Activated CD8-positive, alpha-beta T cell treated with anti-CD3 and anti-CD28 coated beads for 36 hours (primary cell): ENCODE measurements at regions of chr6 and their contacts with region 1.

Region 1: DNA sequence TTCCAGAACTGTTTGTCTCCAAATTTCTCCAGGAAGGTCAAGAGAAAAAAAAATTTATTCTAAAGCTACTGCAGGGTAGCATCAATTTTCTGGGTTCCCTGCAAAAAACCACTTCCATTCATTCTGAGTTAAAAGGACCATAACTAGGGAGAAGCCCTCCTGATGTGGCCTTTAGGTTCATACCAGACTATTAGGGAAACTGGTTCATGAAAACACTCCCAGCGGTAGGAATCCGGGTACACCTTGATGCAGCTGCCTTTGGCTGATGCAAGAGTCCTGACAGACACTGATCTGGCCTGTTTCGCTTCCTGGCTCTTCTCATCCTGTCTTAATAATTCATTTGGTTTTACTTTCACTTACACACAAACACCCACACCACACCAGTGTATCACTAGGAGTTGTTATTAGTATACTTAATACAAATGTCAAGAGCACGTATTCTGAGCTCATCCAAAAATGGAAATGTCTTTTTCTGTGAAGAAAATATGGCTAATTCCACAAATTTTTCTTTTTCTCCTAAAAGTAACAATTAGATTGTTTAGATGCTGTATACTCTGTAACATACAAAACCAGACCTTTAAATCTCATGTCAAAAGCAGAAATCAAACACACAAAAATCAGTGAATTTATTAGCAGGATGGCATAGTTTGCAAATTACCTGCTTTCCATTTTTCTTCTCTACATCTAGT is 38.4 kb upstream of the ARHGAP18 start:
- DNase-seq: peak; percentile 78
- ATAC-seq: peak; percentile 90
- H3K4me3 Mint-ChIP-seq: peak overlapping the region; percentile 75
- H3K27ac Mint-ChIP-seq: peak overlapping the region; percentile 94
- H3K4me1 Mint-ChIP-seq: peaks cover 69% of the 10 kb centered on the region
- H3K27me3 Mint-ChIP-seq: no peaks in the 10 kb centered on the region
- CTCF ChIP-seq: no peak

Region 2: DNA sequence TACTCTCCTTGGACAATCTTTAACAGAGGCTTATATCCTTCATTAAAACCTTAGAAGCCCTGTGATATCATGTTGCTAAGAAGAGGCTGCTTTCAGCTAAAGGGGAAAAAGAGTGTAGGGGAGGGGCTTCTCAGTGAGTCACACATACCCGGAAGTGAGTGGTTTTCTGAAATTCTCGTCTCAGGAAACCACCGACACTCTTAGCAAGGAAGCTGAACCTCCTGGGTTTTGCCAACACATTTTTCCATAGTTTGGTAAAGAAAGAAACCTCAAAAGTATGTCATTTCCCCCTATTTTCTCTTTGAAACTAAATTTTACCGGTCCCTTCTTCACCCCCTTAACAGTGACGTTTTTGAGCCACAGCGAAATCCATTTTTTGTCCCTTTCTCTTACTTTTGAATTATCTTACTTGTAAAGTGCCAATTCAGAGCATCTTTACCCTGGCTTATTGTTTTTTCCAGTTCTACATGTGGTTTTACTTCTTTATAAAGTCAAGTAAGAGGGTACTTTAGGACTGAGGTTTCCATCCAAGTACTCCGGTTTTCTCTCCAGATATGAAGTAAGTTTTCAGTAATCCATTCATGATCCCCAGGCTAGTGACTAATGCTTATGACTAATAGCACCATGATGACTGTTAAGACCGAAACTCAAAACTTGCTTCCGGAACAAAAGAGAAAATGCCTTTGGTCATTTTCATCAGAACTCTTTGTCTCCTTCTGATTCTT is 257.7 kb before region 1 on chr6:
- CTCF ChIA-PET with region 1: interaction called, 4 read pairs
- POLR2A ChIA-PET with region 1: interaction called, 3 read pairs
- intact Hi-C with region 1: loop called (anchors 5 kb)
- DNase-seq: peak; percentile 74
- ATAC-seq: peak; percentile 86
- H3K4me3 Mint-ChIP-seq: peak overlapping the region; percentile 63
- H3K27ac Mint-ChIP-seq: peak overlapping the region; percentile 98
- H3K4me1 Mint-ChIP-seq: peaks cover 70% of the 10 kb centered on the region
- H3K27me3 Mint-ChIP-seq: no peaks in the 10 kb centered on the region
- CTCF ChIP-seq: no peak

Region 3: GRCh38 chr6:129672881-129673643 is 75.3 kb before region 1 on chr6:
- CTCF ChIA-PET with region 1: interaction called, 11 read pairs
- POLR2A ChIA-PET with region 1: interaction called, 3 read pairs
- intact Hi-C with region 1: loop called (anchors 5 kb)
- DNase-seq: peak; percentile 49
- ATAC-seq: peak; percentile 63
- H3K4me3 Mint-ChIP-seq: peak overlapping the region; percentile 59
- H3K27ac Mint-ChIP-seq: peak overlapping the region; percentile 94
- H3K4me1 Mint-ChIP-seq: peaks cover 47% of the 10 kb centered on the region
- H3K27me3 Mint-ChIP-seq: no peaks in the 10 kb centered on the region
- CTCF ChIP-seq: no peak

Region 4: GRCh38 chr6:129683601-129684322 is 64.6 kb before region 1 on chr6:
- CTCF ChIA-PET with region 1: no interaction called
- POLR2A ChIA-PET with region 1: interaction called, 3 read pairs
- intact Hi-C with region 1: loop called (anchors 1 kb)
- DNase-seq: peak; percentile 80
- ATAC-seq: peak; percentile 93
- H3K4me3 Mint-ChIP-seq: peak overlapping the region; percentile 45
- H3K27ac Mint-ChIP-seq: peak overlapping the region; percentile 91
- H3K4me1 Mint-ChIP-seq: peaks cover 50% of the 10 kb centered on the region
- H3K27me3 Mint-ChIP-seq: no peaks in the 10 kb centered on the region
- CTCF ChIP-seq: no peak

Region 5: DNA sequence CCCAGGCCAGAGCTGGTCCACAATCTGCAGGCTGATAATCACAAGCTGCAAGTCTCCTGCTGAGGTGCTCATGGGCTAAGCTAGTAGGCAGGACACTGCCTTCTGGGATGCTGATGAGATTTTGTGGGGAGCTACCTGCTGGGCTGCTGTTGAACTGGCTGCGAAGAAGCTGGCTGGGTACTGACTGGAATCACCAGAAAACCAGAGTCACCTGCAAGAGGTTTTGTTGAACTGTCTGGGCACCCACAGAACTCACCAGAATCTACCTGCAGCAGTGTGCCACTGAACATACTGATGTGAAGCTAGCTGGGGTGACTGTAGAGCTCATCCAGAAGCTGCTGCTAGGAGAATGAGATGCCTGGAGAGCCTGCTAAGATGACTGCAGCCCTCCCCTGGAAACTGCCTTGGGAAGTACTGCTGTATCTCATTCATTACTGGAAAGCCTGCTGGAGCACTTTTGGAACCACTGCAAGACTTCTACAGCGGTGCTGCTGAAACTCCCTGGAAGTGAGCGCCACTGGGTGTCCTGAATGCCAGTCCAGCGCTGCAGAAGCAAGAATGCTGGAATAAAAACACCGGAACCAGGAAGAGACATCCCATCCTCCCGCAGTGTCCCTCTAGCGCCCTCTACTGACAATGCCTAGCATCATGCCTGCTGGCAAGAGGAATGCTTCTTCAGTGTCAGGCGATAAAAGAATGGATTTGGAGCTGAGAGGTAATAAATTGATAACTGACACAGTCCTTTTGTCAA is 26.5 kb after region 1 on chr6:
- CTCF ChIA-PET with region 1: interaction called, 11 read pairs
- POLR2A ChIA-PET with region 1: no interaction called
- intact Hi-C with region 1: no loop called
- DNase-seq: peak; percentile 61
- ATAC-seq: peak; percentile 49
- H3K4me3 Mint-ChIP-seq: no peak overlapping the region
- H3K27ac Mint-ChIP-seq: no peak overlapping the region
- H3K4me1 Mint-ChIP-seq: no peaks in the 10 kb centered on the region
- H3K27me3 Mint-ChIP-seq: peaks cover 3% of the 10 kb centered on the region
- CTCF ChIP-seq: peak; percentile 96